AG04450 (cell line): ENCODE measurements at regions of chr15 and their contacts with region 1.

Region 1: DNA sequence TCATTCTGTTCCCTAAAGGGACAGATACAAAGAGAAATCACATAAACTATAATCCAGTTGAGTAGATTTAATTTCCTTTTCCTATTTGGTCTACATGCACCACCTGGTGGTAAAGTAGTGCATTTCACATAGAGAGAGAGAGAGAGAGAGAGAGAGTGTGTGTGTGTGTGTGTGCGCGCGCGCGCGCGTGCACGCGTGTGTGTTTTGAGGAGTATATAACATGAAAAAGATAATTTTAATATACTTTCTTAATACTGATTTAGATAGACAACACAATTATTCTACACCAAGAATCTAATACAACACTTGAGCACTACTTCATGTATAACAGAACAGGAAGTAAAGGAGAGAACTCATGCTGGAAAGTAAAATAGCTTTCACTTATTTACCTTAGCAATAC is 1.1 kb upstream of the FGF7 start:
- DNase-seq: peak; percentile 34
- H3K4me3 ChIP-seq: no peak overlapping the region
- H3K27ac ChIP-seq: no peak overlapping the region
- H3K27me3 ChIP-seq: no peaks in the 10 kb centered on the region
- CTCF ChIP-seq: peak; percentile 84

Region 2: DNA sequence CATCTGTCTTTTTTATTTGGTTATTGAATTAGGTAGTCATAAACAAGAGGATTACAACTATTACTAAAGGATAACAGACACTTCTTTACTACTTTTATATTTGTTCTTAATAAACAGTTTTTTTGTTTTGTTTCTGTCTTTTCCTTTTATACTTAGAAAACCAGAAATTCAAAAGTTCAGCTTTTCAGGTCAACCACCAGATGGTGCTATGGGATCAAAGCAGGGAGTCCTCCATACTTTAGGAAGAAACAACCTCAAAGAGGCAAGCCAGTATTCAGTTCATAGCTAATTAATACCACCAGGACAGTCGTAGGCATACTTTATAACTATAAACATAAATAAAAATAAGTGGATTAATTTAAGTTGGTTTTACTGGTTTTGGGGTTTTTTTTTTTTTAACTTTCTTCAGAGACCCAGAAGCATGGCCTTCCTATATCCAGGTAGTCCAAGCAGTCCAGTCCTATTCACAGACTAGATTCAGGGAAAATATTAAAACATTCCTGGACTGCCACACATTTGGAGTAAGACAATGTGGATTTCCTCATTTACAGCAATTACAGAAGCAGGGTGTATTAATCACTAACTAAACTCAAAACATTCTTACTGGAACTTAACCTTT is 560.1 kb before region 1 on chr15:
- CTCF ChIA-PET with region 1: interaction called, 31 read pairs
- POLR2A ChIA-PET with region 1: no interaction called
- DNase-seq: no peak
- H3K4me3 ChIP-seq: no peak overlapping the region
- H3K27ac ChIP-seq: no peak overlapping the region
- H3K27me3 ChIP-seq: no peaks in the 10 kb centered on the region
- CTCF ChIP-seq: peak; percentile 88

Region 3: GRCh38 chr15:49235446-49236124 is 186.4 kb before region 1 on chr15:
- CTCF ChIA-PET with region 1: interaction called, 145 read pairs
- POLR2A ChIA-PET with region 1: interaction called, 15 read pairs
- DNase-seq: peak; percentile 77
- H3K4me3 ChIP-seq: no peak overlapping the region
- H3K27ac ChIP-seq: no peak overlapping the region
- H3K27me3 ChIP-seq: no peaks in the 10 kb centered on the region
- CTCF ChIP-seq: peak; percentile 76

Region 4: GRCh38 chr15:49901996-49902684 is 480.1 kb after region 1 on chr15:
- CTCF ChIA-PET with region 1: interaction called, 11 read pairs
- POLR2A ChIA-PET with region 1: interaction called, 3 read pairs
- DNase-seq: no peak
- H3K4me3 ChIP-seq: no peak overlapping the region
- H3K27ac ChIP-seq: peak overlapping the region; percentile 40
- H3K27me3 ChIP-seq: no peaks in the 10 kb centered on the region
- CTCF ChIP-seq: peak; percentile 62

Region 5: DNA sequence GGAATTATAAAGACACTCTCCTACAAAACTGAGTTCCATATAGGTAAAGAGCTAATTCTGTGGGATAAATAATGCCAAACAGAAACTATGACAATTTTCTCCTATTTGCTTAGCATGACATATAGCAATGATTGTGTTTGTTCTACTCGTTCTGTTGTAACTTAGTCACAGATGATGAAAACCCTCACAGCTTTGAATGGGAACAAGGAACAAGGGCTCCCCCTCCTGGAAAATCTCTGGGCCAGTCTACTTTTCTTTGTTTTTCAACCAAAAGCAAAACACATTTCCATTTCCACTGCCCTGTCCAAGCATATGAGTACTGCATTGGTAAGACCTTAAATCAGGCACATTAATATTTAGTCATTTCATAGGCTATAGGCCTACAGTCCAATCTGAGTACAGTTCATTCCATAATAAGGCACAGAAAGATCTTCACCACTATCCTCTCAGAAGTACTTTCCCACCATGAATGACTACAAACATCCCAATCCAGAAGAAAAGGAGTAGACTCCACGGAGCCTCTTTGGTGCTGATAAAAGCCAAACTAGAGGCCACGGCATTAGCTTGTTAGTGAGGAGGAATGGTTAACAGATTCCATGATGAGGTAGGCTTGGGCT is 629.9 kb after region 1 on chr15:
- CTCF ChIA-PET with region 1: interaction called, 20 read pairs
- POLR2A ChIA-PET with region 1: interaction called, 7 read pairs
- DNase-seq: peak; percentile 61
- H3K4me3 ChIP-seq: no peak overlapping the region
- H3K27ac ChIP-seq: no peak overlapping the region
- H3K27me3 ChIP-seq: no peaks in the 10 kb centered on the region
- CTCF ChIP-seq: peak; percentile 85